OCI-LY7 (cell line): ENCODE measurements at regions of chr4 and their contacts with region 1.

Region 1: GRCh38 chr4:3880615-3881120 is 114.5 kb downstream of the ADRA2C start:
- DNase-seq: peak; percentile 68
- H3K4me3 ChIP-seq: no peak overlapping the region
- H3K27ac ChIP-seq: no peak overlapping the region
- H3K4me1 ChIP-seq: no peaks in the 10 kb centered on the region
- CTCF ChIP-seq: peak; percentile 84

Region 2: DNA sequence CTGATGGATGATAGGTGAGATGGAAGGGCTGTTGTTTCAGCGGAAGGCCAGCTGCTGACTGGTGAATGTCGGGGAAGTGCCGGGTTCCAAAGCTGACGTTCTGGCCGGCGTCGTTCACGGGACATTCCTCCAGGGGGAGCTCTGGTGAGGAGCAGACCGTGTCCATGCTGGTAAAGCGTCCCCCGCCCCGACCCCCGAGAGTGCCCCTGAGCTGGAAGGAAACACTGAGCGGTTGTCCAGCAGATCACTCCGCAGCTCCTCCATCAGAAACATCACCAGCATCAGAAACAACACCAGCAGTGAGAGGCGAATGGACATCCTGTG is 133.1 kb before region 1 on chr4:
- CTCF ChIA-PET with region 1: no interaction called
- POLR2A ChIA-PET with region 1: no interaction called
- intact Hi-C with region 1: loop called (anchors 5 kb)
- DNase-seq: no peak
- H3K4me3 ChIP-seq: no peak overlapping the region
- H3K27ac ChIP-seq: no peak overlapping the region
- H3K4me1 ChIP-seq: no peaks in the 10 kb centered on the region
- CTCF ChIP-seq: peak; percentile 49

Region 3: DNA sequence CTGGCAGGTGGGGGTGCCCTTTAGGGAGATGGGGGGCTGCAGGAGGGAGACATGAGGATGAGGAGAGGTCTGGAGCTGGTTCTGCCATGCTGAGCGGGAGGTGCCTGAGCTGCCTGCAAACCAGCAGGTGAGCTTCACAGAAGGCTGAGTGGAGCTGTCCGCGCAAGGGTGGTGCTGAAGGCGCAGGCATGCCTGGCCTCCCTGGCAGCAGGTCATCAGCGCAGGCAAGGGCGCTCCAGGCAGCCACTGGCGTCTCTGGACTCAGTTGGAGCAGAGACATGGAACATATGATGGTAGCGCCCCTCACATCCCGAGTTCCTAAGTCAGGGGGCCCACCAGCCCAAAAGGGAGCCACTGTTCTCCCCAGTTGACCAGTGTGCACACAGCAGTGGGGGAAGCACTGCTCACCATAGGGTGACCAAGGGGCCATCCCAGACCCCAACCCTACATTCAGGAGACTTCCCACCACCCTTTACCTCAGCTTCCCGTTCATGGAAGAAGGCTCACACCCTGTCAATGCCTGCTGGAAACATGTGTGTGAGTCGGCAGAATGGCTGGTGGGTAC is 88.6 kb before region 1 on chr4:
- CTCF ChIA-PET with region 1: no interaction called
- POLR2A ChIA-PET with region 1: no interaction called
- intact Hi-C with region 1: loop called (anchors 10 kb)
- DNase-seq: peak; percentile 20
- H3K4me3 ChIP-seq: no peak overlapping the region
- H3K27ac ChIP-seq: no peak overlapping the region
- H3K4me1 ChIP-seq: no peaks in the 10 kb centered on the region
- CTCF ChIP-seq: no peak